Panc1 (cell line): ENCODE measurements at regions of chr6 and their contacts with region 1.

Region 1: DNA sequence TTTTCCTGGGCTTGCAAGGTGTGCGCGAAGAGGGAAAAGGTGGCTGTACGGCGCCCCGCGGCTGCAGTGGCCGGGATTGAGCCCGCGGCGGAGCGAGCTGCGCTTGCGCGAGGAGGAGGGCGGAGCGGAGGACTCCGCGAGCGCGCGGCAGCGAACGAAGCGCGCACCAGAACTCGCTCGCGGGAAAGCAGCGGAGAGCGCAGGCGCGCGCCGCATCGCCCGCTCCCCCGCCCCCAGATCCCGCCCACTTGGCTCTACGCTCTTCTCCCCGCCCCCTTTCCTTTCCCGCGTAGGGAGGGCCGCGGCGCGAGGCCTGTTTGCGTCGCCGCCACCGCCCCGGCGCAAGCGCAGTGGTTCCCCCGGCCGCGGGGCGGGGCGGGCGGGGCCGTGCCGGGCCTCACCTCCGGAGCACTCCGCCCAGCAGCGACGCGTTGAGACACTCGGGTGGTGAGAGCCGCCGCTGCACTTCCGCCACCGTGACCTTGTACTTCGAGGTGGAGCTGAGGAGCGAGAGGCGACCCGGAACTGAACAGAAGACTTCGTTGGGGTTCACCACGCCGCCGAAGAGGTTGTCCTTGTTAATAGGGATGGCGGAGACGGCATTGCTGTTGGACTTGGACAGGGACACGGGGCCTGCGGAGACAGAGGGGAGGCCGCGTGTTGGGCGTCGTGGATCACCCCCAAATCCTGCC is 10.6 kb downstream of the TFAP2A start:
- DNase-seq: no peak
- ATAC-seq: peak; percentile 89
- H3K4me3 ChIP-seq: peak overlapping the region; percentile 68 to 96
- H3K27ac ChIP-seq: peak overlapping the region; percentile 99
- H3K4me1 ChIP-seq: peaks cover 85% of the 10 kb centered on the region
- H3K27me3 ChIP-seq: no peaks in the 10 kb centered on the region
- CTCF ChIP-seq: peak; percentile 78

Region 2: DNA sequence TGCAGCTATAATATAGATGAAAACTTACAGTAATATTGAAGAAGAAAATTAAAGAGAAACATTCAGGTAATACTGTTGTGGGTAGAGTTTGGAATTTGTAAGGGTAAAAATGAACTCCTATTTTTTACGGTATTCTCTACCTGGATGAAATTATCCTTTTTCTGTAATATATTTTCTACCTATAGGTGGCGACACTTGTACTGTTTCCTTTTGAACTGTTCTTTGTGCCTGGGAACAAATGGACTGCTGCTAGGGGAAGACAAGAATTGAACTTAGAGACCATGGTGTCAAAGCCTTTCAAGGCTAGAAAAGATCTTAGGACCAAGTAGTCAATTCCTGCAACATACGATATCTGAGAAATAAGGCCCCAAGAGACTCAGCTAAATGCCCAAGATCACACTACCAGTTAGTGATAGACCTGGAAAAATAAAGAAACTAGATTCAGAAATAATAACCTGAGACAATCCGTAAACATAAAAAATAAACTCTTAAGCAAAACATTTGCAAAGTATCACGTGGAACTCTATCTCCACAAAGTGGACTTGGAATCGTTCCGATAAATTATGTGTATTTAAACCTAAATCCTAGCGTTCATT is 373.2 kb before region 1 on chr6:
- CTCF ChIA-PET with region 1: no interaction called
- POLR2A ChIA-PET with region 1: no interaction called
- in situ Hi-C with region 1: no loop called
- intact Hi-C with region 1: loop called (anchors 5 kb)
- DNase-seq: no peak
- ATAC-seq: no peak
- H3K4me3 ChIP-seq: no peak overlapping the region
- H3K27ac ChIP-seq: peak overlapping the region; percentile 97; the same call in 1 of the 2 replicates
- H3K4me1 ChIP-seq: peaks cover 24% of the 10 kb centered on the region
- H3K27me3 ChIP-seq: no peaks in the 10 kb centered on the region
- CTCF ChIP-seq: peak; percentile 65

Region 3: GRCh38 chr6:10383059-10383780 is 21.0 kb before region 1 on chr6:
- CTCF ChIA-PET with region 1: no interaction called
- POLR2A ChIA-PET with region 1: no interaction called
- in situ Hi-C with region 1: no loop called
- intact Hi-C with region 1: no loop called
- DNase-seq: no peak
- ATAC-seq: peak; percentile 97
- H3K4me3 ChIP-seq: peak overlapping the region; percentile 39 to 64
- H3K27ac ChIP-seq: peak overlapping the region; percentile 87
- H3K4me1 ChIP-seq: peaks cover 31% of the 10 kb centered on the region
- H3K27me3 ChIP-seq: no peaks in the 10 kb centered on the region
- CTCF ChIP-seq: no peak